WTC11 (cell line): ENCODE measurements at regions of chr11 and their contacts with region 1.

Region 1: GRCh38 chr11:11010624-11011127 is 152.8 kb upstream of the ZBED5 start:
- DNase-seq: peak; percentile 47
- ATAC-seq: peak; percentile 92
- H3K4me3 Mint-ChIP-seq: peak overlapping the region; percentile 38
- H3K27ac Mint-ChIP-seq: no peak overlapping the region
- H3K4me1 Mint-ChIP-seq: peaks cover 21% of the 10 kb centered on the region
- H3K27me3 Mint-ChIP-seq: peaks cover 5% of the 10 kb centered on the region
- CTCF ChIP-seq: no peak

Region 2: DNA sequence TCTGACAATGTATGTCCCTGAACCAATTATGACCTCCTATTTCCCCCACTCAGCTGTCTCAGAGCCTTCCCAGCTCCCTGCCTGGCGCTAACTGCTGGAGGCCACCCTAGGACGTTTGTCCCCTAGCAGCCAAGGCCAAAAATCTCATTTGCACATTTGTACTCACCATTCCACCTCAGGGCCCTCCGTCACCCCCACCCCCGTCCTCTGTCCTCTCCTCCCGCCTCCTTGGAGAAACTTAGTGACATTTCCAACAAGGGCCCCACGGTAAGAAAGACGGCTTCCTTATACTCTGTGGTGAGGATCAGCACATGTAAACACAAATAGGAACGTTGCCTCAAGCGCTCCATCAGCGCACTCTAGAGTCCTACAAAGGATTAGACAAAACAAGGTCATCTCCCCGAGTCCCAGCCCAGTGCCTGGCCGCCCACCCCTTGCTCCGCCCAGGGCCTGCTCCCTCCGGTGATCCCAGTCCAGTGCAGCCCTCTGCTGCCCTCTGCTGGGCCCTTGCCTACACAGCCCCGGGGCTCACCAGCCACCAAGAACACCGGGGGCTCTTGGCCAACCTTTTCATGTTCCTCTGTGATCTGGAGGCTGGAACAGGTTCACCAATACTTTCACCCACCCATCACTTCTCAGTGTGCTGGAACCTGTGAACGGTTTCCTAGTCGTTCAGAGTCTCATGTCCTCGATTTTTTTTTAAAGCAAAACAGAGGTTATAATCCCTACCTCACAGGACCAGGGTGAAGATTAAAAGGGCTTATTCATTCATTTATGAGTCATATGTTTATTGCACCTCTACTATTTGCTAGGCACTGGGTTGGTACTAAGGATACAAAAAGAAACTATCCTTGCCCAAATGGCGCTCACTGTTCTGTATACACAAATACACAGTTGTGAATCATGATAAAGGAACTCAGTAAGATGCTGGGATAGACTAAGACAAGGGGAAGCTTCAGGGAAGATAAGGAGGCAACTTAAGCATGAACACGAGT is 274.9 kb before region 1 on chr11:
- CTCF ChIA-PET with region 1: no interaction called
- POLR2A ChIA-PET with region 1: no interaction called
- DNase-seq: peak; percentile 96
- ATAC-seq: peak; percentile 100
- H3K4me3 Mint-ChIP-seq: peak overlapping the region; percentile 54
- H3K27ac Mint-ChIP-seq: no peak overlapping the region
- H3K4me1 Mint-ChIP-seq: peaks cover 6% of the 10 kb centered on the region
- H3K27me3 Mint-ChIP-seq: no peaks in the 10 kb centered on the region
- CTCF ChIP-seq: peak; percentile 94

Region 3: DNA sequence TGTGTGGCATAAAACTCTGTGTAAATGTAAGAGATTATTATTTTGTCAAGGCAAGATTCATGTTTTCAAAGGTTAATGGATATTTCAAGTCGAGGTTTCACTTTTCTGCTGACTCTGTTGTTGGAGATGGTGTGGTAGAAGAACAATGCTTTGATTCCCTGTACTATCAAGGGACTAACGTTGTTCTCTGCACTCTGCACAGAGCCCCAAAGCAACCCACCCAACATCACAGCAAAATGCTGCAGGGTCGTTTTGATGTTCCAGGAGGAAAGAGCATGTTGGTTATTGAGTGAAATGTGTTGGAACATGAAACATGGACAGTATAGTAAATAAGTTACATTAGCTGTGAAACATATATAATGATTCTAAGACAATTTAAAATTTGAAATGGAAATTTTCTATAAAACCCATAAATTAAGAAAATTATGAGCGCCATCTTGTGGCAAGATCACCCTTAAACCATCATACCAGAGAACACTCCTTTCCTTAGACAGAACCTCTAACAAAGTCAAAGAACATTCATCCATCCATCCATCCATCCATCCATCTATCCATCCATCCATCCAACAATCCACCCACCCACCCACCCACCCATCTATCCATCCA is 11.6 kb after region 1 on chr11:
- CTCF ChIA-PET with region 1: interaction called, 24 read pairs
- POLR2A ChIA-PET with region 1: no interaction called
- DNase-seq: no peak
- ATAC-seq: peak; percentile 47; the same call in 1 of the 2 replicates
- H3K4me3 Mint-ChIP-seq: no peak overlapping the region
- H3K27ac Mint-ChIP-seq: no peak overlapping the region
- H3K4me1 Mint-ChIP-seq: peaks cover 12% of the 10 kb centered on the region
- H3K27me3 Mint-ChIP-seq: no peaks in the 10 kb centered on the region
- CTCF ChIP-seq: no peak